HepG2 (cell line): ENCODE measurements at regions of chr20 and their contacts with region 1.

Region 1: DNA sequence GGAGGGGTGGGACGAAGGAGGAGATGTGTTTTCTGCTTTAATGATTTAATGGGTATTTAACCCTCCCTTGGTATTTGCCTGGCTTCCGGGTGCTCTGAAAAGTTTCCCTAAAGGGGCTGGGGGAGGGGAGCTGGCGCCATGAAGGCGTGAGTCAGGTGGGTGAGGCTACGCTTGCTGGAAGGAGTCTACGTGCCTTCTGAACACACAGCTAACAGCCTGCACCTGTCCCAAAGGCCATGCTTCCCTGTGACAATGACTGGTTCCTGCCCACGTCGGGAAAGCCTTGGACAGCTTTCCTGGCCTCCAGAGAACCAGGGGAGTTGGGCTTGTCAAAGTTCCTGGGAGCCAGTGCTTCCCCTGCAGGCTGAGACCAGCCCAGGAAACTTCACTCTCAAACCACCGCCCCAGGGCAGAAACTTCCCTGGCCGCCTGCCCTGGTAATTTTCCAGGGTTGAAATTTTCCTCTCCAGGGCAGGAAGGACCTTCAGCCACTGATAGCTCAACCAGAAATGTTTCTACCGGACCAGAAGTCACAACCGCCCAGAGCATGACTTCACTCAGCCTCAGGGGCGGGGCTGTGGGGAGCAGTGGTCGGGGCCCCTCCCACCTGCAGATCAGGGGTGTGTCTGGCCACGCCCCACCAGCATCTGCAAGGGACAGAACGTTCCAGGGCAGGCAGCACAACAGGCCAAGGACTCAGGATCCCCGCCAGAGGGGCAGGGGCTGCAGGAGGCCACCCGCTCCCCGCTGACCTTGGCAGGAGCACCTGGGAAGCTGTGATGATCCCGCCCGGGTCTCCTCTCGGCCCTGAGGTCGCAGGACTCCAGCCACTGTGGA is 18.6 kb upstream of the SLCO4A1 start:
- DNase-seq: peak; percentile 98
- ATAC-seq: peak; percentile 87
- H3K4me3 ChIP-seq: peak overlapping the region; percentile 31 to 65 (median 37); a peak in 5 of 6 replicates
- H3K27ac ChIP-seq: peak overlapping the region; percentile 95
- H3K4me1 ChIP-seq: peaks cover 68% of the 10 kb centered on the region
- H3K27me3 ChIP-seq: peaks cover 2 to 8% of the 10 kb centered on the region in 2 experiments; a peak in 3 of 5 replicates
- CTCF ChIP-seq: peak; percentile 6; the same call in 1 of the 2 replicates
- EP300 ChIP-seq: peak; percentile 16 to 83; a peak in 3 of 4 replicates
- POLR2A ChIP-seq: peak in 1 of 2 experiments; percentile 82; a peak in 2 of 4 replicates
- RAD21 ChIP-seq: no peak

Region 2: GRCh38 chr20:62536871-62537401 is 86.8 kb before region 1 on chr20:
- CTCF ChIA-PET with region 1: no interaction called
- POLR2A ChIA-PET with region 1: no interaction called
- in situ Hi-C with region 1: no loop called
- intact Hi-C with region 1: no loop called
- DNase-seq: no peak
- ATAC-seq: no peak
- H3K4me3 ChIP-seq: no peak overlapping the region
- H3K27ac ChIP-seq: no peak overlapping the region
- H3K4me1 ChIP-seq: peaks cover 6% of the 10 kb centered on the region
- H3K27me3 ChIP-seq: peaks cover 31 to 96% of the 10 kb centered on the region in 2 experiments
- CTCF ChIP-seq: no peak
- EP300 ChIP-seq: no peak
- POLR2A ChIP-seq: no peak
- RAD21 ChIP-seq: no peak

Region 3: GRCh38 chr20:62636446-62636845 is 12.7 kb after region 1 on chr20:
- CTCF ChIA-PET with region 1: no interaction called
- POLR2A ChIA-PET with region 1: interaction called, 27 read pairs
- in situ Hi-C with region 1: no loop called
- intact Hi-C with region 1: loop called (anchors 1 kb)
- DNase-seq: no peak
- ATAC-seq: no peak
- H3K4me3 ChIP-seq: no peak overlapping the region
- H3K27ac ChIP-seq: no peak overlapping the region
- H3K4me1 ChIP-seq: peaks cover 99% of the 10 kb centered on the region
- H3K27me3 ChIP-seq: peaks cover 24 to 69% of the 10 kb centered on the region in 2 experiments
- CTCF ChIP-seq: no peak
- EP300 ChIP-seq: no peak
- POLR2A ChIP-seq: no peak
- RAD21 ChIP-seq: no peak

Region 4: DNA sequence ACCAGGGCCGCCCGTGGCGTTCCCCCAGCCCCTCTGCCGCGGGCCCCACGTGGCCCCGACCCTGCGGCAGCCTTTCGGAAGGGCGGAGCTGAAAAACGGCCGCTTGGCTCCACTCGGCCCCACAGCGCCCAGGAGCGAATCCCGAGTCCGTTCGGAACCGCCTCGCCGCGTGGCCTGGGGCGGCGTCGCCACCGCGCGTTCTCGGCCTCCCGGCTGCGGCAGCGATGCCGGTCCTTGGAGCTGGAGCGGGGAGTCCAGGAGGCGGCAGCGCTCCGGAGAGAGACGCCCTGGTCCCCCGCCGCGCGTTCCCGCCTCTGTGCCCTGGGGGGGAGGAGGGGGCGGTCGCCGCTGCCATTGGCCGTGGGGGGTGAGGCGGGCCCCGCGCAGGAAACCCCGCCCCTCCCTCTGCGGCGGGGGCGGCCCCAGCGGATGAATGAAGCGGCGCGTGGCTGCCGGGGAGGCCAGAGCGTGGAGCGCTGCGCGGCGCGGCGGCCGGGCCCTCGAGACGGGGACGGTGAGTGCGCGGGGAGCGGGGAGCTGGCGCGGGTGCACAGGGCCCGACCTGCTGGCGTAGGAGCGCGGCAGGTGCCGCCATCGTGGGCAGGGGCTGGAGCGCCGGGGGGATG is 18.4 kb after region 1 on chr20 and contains the start of gene SLCO4A1:
- CTCF ChIA-PET with region 1: no interaction called
- POLR2A ChIA-PET with region 1: interaction called, 27 read pairs
- in situ Hi-C with region 1: no loop called
- intact Hi-C with region 1: loop called (anchors 1 kb)
- DNase-seq: peak; percentile 59
- ATAC-seq: peak; percentile 71
- H3K4me3 ChIP-seq: peak within 1 kb of the TSS; percentile 67 to 86 (median 72)
- H3K27ac ChIP-seq: peak within 1 kb of the TSS; percentile 9
- H3K4me1 ChIP-seq: peaks cover 87% of the 10 kb centered on the region
- H3K27me3 ChIP-seq: peaks cover 11 to 13% of the 10 kb centered on the region in 2 experiments
- CTCF ChIP-seq: peak; percentile 53; the same call in 1 of the 2 replicates
- EP300 ChIP-seq: peak in 1 of 2 experiments; percentile 35; a peak in 1 of 4 replicates
- POLR2A ChIP-seq: peak; percentile 32 to 94; a peak in 2 of 4 replicates
- RAD21 ChIP-seq: no peak; the same call in none of the 2 replicates
- total RNA-seq, gene SLCO4A1: 23.8 and 55.5 TPM in 2 replicates

Region 5: GRCh38 chr20:62652051-62652926 is 28.6 kb after region 1 on chr20:
- CTCF ChIA-PET with region 1: no interaction called
- POLR2A ChIA-PET with region 1: interaction called, 17 read pairs
- in situ Hi-C with region 1: no loop called
- intact Hi-C with region 1: no loop called
- DNase-seq: peak; percentile 90
- ATAC-seq: peak; percentile 70
- H3K4me3 ChIP-seq: peak overlapping the region; percentile 2 to 44 (median 17); a peak in 5 of 6 replicates
- H3K27ac ChIP-seq: peak overlapping the region; percentile 78
- H3K4me1 ChIP-seq: peaks cover 33% of the 10 kb centered on the region
- H3K27me3 ChIP-seq: no peaks in the 10 kb centered on the region
- CTCF ChIP-seq: no peak; the same call in 1 of the 2 replicates
- EP300 ChIP-seq: peak; percentile 14 to 84; a peak in 2 of 4 replicates
- POLR2A ChIP-seq: peak in 1 of 2 experiments; percentile 56; a peak in 2 of 4 replicates
- RAD21 ChIP-seq: no peak

Region 6: DNA sequence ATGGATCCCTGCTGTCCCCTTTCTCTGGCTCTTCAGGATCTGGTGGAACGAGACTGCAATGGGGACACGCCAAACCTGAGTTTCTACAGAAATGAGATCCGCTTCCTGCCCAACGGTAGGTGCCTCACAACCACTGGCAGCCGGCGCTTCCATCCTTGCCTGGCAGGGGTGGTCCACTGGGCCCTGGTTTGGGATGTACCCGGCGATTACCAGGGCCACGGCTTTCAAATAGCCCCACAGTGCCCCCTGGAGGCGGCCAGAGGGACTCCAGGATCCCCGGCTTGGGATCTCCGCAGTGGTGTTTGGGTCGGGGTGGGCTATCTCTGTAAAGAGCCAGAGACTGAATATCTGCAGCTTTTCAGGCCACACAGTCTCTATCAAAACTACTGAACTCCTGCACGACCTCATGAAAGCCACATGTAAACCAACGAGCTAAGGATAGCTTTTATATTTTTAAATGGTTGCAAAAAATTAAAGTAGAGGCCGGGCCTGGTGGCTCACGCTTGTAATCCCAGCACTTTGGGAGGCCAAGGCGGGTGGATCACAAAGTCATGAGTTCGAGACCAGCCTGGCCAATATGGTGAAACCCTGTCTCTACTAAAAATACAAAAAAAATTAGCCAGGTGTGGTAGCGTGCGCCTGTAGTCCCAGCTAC is 184.6 kb after region 1 on chr20:
- CTCF ChIA-PET with region 1: interaction called, 6 read pairs
- POLR2A ChIA-PET with region 1: interaction called, 5 read pairs
- in situ Hi-C with region 1: no loop called
- intact Hi-C with region 1: loop called (anchors 5 kb)
- DNase-seq: peak; percentile 66
- ATAC-seq: peak; percentile 18
- H3K4me3 ChIP-seq: no peak overlapping the region
- H3K27ac ChIP-seq: no peak overlapping the region
- H3K4me1 ChIP-seq: peaks cover 38% of the 10 kb centered on the region
- H3K27me3 ChIP-seq: no peaks in the 10 kb centered on the region
- CTCF ChIP-seq: peak; percentile 95
- EP300 ChIP-seq: no peak
- POLR2A ChIP-seq: no peak; a peak in 3 of 4 replicates
- RAD21 ChIP-seq: peak; percentile 91